Activated B cell treated with CpG ODN at 0.5 μM for 24 hours (primary cell): ENCODE measurements at regions of chrX and their contacts with region 1.

Region 1: GRCh38 chrX:23782863-23783568 is at the start of gene SAT1:
- DNase-seq: peak; percentile 78
- ATAC-seq: peak; percentile 85
- H3K4me3 Mint-ChIP-seq: peak within 1 kb of the TSS; percentile 94
- H3K27ac Mint-ChIP-seq: peak within 1 kb of the TSS; percentile 95
- H3K4me1 Mint-ChIP-seq: peaks cover 43% of the 10 kb centered on the region
- H3K27me3 Mint-ChIP-seq: no peaks in the 10 kb centered on the region
- CTCF ChIP-seq: no peak
- total RNA-seq, gene SAT1: 75.1 and 88.9 TPM in 2 replicates

Region 2: DNA sequence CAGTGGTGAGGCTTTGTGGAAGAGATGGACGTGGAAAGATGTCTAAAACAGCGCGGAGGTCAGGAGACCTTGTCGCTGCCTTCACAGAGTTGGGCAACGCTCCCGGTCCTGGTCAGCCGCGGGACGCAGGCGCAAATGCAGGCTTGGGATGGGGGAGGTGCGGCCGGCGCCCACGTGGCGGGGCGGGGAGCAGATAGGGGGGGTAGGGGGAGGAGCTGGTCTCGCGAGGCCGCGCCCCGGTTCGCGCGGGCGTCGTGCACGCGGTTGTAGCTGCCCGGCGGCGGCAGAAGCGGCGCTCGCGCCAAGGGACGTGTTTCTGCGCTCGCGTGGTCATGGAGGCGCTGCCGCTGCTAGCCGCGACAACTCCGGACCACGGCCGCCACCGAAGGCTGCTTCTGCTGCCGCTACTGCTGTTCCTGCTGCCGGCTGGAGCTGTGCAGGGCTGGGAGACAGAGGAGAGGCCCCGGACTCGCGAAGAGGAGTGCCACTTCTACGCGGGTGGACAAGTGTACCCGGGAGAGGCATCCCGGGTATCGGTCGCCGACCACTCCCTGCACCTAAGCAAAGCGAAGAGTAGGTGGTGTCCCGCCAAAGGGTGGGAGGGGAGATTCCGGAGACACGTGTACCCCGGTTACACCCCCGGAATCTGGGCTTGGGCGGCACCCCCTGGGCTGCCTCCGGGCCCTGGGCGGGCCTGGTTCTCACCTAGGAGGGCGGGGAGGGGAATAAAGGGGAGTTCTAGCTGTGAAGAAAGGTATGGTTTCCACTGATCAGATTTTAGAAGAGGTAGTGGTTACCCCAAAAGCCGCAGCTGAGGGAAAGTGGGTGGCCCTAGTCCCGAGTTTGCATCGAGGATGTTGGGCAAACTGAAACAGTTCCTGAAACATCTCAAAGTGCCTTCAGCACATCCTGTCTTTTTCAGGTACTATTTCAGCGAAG is 115.5 kb before region 1 on chrX and contains the start of gene PRDX4:
- CTCF ChIA-PET with region 1: no interaction called
- POLR2A ChIA-PET with region 1: interaction called, 6 read pairs
- intact Hi-C with region 1: loop called (anchors 2 kb)
- DNase-seq: peak; percentile 66
- ATAC-seq: peak; percentile 85
- H3K4me3 Mint-ChIP-seq: peak within 1 kb of the TSS; percentile 84
- H3K27ac Mint-ChIP-seq: peak within 1 kb of the TSS; percentile 91
- H3K4me1 Mint-ChIP-seq: peaks cover 25% of the 10 kb centered on the region
- H3K27me3 Mint-ChIP-seq: no peaks in the 10 kb centered on the region
- CTCF ChIP-seq: no peak
- total RNA-seq, gene PRDX4: 29.2 and 35.5 TPM in 2 replicates

Region 3: DNA sequence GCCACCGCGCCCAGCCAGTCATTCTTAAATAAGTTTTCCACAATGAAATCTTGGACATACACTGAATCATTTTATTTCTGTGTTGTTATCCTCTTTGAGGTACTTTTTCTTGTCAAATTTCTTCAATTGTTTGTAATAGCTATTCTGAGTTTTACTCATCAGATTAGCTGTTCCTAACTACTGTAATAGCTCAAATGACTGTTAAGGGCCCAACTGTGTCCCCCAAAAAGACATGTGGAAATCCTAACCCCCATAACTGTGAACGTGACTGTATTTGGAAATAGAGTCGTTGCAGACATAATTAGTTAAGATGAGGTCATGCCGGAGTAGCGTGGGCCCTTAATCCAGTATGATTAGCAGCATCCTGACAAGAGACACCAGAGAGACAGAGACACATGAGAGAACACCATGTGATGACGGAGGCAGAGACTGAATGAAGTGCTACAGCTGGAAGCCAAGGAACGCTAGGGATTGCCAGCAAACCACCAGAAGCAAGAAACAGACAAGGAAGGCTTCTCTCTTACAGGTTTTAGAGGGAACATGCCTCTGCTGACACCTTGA is 62.8 kb before region 1 on chrX:
- CTCF ChIA-PET with region 1: no interaction called
- POLR2A ChIA-PET with region 1: no interaction called
- intact Hi-C with region 1: no loop called
- DNase-seq: no peak
- ATAC-seq: no peak
- H3K4me3 Mint-ChIP-seq: no peak overlapping the region
- H3K27ac Mint-ChIP-seq: no peak overlapping the region
- H3K4me1 Mint-ChIP-seq: no peaks in the 10 kb centered on the region
- H3K27me3 Mint-ChIP-seq: no peaks in the 10 kb centered on the region
- CTCF ChIP-seq: no peak

Region 4: GRCh38 chrX:23732704-23733103 is 50.3 kb before region 1 on chrX:
- CTCF ChIA-PET with region 1: no interaction called
- POLR2A ChIA-PET with region 1: interaction called, 6 read pairs
- intact Hi-C with region 1: loop called (anchors 2 kb)
- DNase-seq: no peak
- ATAC-seq: peak; percentile 77
- H3K4me3 Mint-ChIP-seq: peak overlapping the region; percentile 37
- H3K27ac Mint-ChIP-seq: peak overlapping the region; percentile 80
- H3K4me1 Mint-ChIP-seq: peaks cover 18% of the 10 kb centered on the region
- H3K27me3 Mint-ChIP-seq: no peaks in the 10 kb centered on the region
- CTCF ChIP-seq: no peak

Region 5: DNA sequence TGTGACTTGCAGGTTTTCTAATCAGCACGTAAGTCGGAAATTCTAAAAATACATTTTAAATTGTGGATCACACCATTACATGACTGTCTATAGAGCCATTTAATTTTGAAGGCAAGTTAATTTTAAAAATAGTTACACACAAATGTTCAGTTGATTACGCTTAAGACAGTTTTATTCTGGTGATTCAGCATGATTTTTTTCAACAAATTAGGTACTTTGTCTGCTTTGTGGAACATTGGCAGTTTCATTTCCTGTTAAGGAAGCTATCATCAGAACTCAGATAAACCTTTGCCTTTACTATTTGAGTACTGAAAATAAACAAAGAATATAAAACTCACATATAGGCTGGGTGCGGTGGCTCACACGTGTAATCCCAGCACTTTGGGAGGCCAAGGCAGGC is 19.4 kb after region 1 on chrX:
- CTCF ChIA-PET with region 1: no interaction called
- POLR2A ChIA-PET with region 1: interaction called, 10 read pairs
- intact Hi-C with region 1: no loop called
- DNase-seq: no peak
- ATAC-seq: peak; percentile 7
- H3K4me3 Mint-ChIP-seq: no peak overlapping the region
- H3K27ac Mint-ChIP-seq: no peak overlapping the region
- H3K4me1 Mint-ChIP-seq: peaks cover 11% of the 10 kb centered on the region
- H3K27me3 Mint-ChIP-seq: no peaks in the 10 kb centered on the region
- CTCF ChIP-seq: no peak

Region 6: DNA sequence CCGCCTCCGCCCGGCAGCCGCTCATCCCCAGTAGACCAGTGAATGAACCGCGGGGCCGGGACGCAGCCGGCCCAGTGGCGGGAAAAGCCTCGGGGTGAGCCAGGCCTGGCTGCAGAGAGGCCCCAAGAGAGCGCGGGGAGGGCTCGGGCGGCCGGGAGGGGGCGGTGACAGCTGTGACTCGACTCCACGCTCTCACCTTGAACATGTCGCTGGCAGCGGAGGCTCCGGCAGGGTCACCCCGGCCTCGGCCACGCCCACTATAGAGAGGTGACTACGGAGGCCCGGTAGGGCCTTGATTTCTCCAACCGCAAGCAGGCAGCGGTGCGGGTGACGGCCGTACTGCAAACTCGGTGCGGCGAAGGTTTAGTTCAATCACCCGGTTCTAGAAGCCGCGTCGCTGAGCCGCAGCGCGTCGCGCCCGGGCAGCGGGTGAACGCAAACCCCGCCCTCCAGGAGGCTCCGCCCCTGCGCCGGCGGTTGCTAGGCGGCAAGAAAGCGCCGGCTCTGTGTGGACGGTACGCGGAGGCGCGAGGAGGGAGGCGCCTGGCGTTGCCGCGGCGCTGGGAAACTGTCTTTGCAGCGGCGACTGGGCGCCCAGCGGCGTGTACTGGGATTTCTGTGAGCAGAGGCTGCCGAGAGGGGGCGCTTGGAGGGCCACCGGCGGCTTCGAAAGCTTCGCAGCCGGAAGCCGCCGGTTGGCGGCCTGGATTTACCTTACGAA is 124.6 kb after region 1 on chrX and contains the starts of genes APOO and CXorf58:
- CTCF ChIA-PET with region 1: interaction called, 56 read pairs
- POLR2A ChIA-PET with region 1: interaction called, 55 read pairs
- intact Hi-C with region 1: loop called (anchors 1 kb)
- DNase-seq: peak; percentile 85
- ATAC-seq: peak; percentile 90
- H3K4me3 Mint-ChIP-seq: peak within 1 kb of the TSS; percentile 82
- H3K27ac Mint-ChIP-seq: peak within 1 kb of the TSS; percentile 88
- H3K4me1 Mint-ChIP-seq: peaks cover 17% of the 10 kb centered on the region
- H3K27me3 Mint-ChIP-seq: no peaks in the 10 kb centered on the region
- CTCF ChIP-seq: peak; percentile 7
- total RNA-seq, gene APOO: 14.0 and 16.6 TPM in 2 replicates
- total RNA-seq, gene CXorf58: not detected in 2 replicates

Region 7: GRCh38 chrX:24034485-24034884 is 251.5 kb after region 1 on chrX:
- CTCF ChIA-PET with region 1: no interaction called
- POLR2A ChIA-PET with region 1: no interaction called
- intact Hi-C with region 1: no loop called
- DNase-seq: no peak
- ATAC-seq: no peak
- H3K4me3 Mint-ChIP-seq: no peak overlapping the region
- H3K27ac Mint-ChIP-seq: no peak overlapping the region
- H3K4me1 Mint-ChIP-seq: no peaks in the 10 kb centered on the region
- H3K27me3 Mint-ChIP-seq: no peaks in the 10 kb centered on the region
- CTCF ChIP-seq: no peak

Region 8: GRCh38 chrX:24150051-24150790 is 367.2 kb after region 1 on chrX:
- CTCF ChIA-PET with region 1: no interaction called
- POLR2A ChIA-PET with region 1: interaction called, 10 read pairs
- intact Hi-C with region 1: loop called (anchors 1 kb)
- DNase-seq: peak; percentile 72
- ATAC-seq: peak; percentile 68
- H3K4me3 Mint-ChIP-seq: peak overlapping the region; percentile 86
- H3K27ac Mint-ChIP-seq: peak overlapping the region; percentile 86
- H3K4me1 Mint-ChIP-seq: peaks cover 61% of the 10 kb centered on the region
- H3K27me3 Mint-ChIP-seq: no peaks in the 10 kb centered on the region
- CTCF ChIP-seq: no peak